ENCODE measurements at regions of chr16 and their contacts with region 1.

Region 1: GRCh38 chr16:84875846-84876245 is 56.1 kb downstream of the CRISPLD2 start:
- DNase-seq: no peak
- ATAC-seq: no peak
- H3K4me3 ChIP-seq: no peak overlapping the region
- H3K4me3 Mint-ChIP-seq: no peak overlapping the region
- H3K27ac ChIP-seq: no peak overlapping the region
- H3K27ac Mint-ChIP-seq: no peak overlapping the region
- H3K4me1 ChIP-seq: no peaks in the 10 kb centered on the region
- H3K4me1 Mint-ChIP-seq: no peaks in the 10 kb centered on the region
- H3K27me3 ChIP-seq: peaks cover 0 to 4% of the 10 kb centered on the region in 2 experiments
- H3K27me3 Mint-ChIP-seq: no peaks in the 10 kb centered on the region

Region 2: DNA sequence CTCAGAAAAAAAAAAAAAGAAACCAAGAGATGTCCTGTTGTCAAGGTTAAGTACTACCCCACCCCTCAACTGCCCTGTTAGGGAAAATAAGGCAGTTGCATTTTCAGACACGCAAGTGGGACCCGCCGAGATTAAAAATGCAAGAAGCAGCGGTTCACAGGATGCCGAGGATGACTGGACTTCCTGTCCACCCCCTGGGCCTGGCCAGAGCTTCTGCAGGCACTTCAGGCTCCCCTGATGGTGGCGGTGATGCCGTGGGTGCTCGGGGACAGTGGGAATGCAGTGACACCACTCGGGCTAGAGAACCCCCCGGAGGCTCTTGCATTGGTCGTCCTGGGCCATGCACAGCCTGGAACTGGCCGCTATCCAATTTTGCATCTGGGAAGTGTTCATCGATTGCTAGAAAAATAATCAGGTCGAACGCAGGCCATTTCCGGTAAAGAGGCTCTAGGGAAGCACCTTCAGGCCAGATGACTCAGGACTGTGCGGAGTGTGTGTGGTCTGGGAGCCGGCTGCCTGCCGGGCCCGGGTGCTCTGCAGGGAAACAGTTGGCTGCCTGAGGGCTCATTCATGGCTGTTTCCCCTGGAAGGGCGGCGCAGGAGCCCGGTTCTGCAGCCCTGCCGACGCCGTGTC is 69.5 kb before region 1 on chr16:
- CTCF ChIA-PET with region 1: no interaction called
- POLR2A ChIA-PET with region 1: no interaction called
- DNase-seq: peak in 3 of 35 experiments; percentile 6 to 42 (median 6)
- ATAC-seq: no peak
- H3K4me3 ChIP-seq: no peak overlapping the region
- H3K4me3 Mint-ChIP-seq: no peak overlapping the region
- H3K27ac ChIP-seq: no peak overlapping the region
- H3K27ac Mint-ChIP-seq: no peak overlapping the region
- H3K4me1 ChIP-seq: peaks cover 0 to 18% of the 10 kb centered on the region in 2 experiments
- H3K4me1 Mint-ChIP-seq: peaks cover 8 to 21% (median 9%) of the 10 kb centered on the region in 3 donors
- H3K27me3 ChIP-seq: peaks cover 0 to 22% of the 10 kb centered on the region in 2 experiments
- H3K27me3 Mint-ChIP-seq: peaks cover 0 to 11% of the 10 kb centered on the region in 2 donors

Region 3: DNA sequence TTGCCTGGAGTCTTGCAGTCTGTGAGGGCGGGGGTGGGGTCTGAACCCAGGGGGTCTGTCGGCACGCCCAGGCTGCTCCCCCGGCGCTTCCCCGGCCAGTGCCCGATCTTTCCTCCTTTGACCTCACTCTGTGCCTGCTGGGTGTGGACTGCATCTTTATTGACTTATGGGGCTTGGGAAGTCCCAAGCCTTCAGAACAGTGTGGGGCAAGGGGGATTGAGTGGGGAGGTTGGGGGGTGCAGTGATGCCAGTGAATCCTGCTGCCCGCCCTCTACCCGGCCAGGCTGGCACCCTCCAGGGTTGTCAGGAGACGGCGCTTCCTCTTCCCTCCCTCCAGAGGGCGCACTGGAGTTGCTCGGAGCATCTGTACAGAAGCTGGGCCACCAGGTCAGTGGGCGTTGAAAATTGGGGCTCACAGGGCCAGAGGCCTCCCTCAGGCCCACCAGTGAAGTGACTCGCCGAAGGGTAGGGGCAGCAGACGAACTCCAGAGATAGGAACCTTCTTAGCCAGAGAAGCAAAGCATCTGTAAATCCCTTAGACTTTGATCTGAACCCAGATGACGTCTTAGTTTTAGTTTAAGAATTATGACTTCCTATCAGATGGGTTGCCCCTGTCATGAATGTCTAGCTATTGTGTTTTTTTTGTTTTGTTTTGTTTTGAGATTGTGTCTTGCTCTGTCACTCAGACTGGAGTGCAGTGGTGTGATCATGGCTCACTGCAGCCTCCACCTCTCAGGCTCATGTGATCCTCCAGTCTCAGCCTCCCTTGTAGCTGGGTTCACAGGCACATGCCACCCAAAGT is 421.2 kb after region 1 on chr16:
- CTCF ChIA-PET with region 1: no interaction called
- POLR2A ChIA-PET with region 1: interaction called in 1 of 2 experiments, 15 read pairs
- DNase-seq: peak in 27 of 35 experiments; percentile 28 to 64 (median 47)
- ATAC-seq: peak; percentile 76 to 86 (median 76)
- H3K4me3 ChIP-seq: no peak overlapping the region
- H3K4me3 Mint-ChIP-seq: no peak overlapping the region
- H3K27ac ChIP-seq: no peak overlapping the region
- H3K27ac Mint-ChIP-seq: no peak overlapping the region
- H3K4me1 ChIP-seq: peaks cover 0 to 2% of the 10 kb centered on the region in 2 experiments
- H3K4me1 Mint-ChIP-seq: peaks cover 0 to 2% (median 0%) of the 10 kb centered on the region in 3 donors
- H3K27me3 ChIP-seq: peaks cover 0 to 17% of the 10 kb centered on the region in 2 experiments
- H3K27me3 Mint-ChIP-seq: peaks cover 0 to 4% of the 10 kb centered on the region in 2 donors